PC-3 (cell line): ENCODE measurements at regions of chr1 and their contacts with region 1.

Region 1: GRCh38 chr1:182215764-182216163 is 154.3 kb upstream of the ZNF648 start:
- DNase-seq: peak; percentile 70
- ATAC-seq: peak; percentile 56
- H3K4me3 ChIP-seq: no peak overlapping the region
- H3K27ac ChIP-seq: peak overlapping the region; percentile 89
- H3K4me1 ChIP-seq: peaks cover 27% of the 10 kb centered on the region
- H3K27me3 ChIP-seq: no peaks in the 10 kb centered on the region
- CTCF ChIP-seq: no peak

Region 2: GRCh38 chr1:182185813-182186756 is 29.7 kb before region 1 on chr1:
- CTCF ChIA-PET with region 1: no interaction called
- POLR2A ChIA-PET with region 1: interaction called, 3 read pairs
- intact Hi-C with region 1: loop called (anchors 1 kb)
- DNase-seq: peak; percentile 92
- ATAC-seq: peak; percentile 87
- H3K4me3 ChIP-seq: peak overlapping the region; percentile 23; the same call in 1 of the 2 replicates
- H3K27ac ChIP-seq: peak overlapping the region; percentile 82
- H3K4me1 ChIP-seq: peaks cover 35% of the 10 kb centered on the region
- H3K27me3 ChIP-seq: no peaks in the 10 kb centered on the region
- CTCF ChIP-seq: no peak

Region 3: GRCh38 chr1:182235952-182236650 is 20.3 kb after region 1 on chr1:
- CTCF ChIA-PET with region 1: no interaction called
- POLR2A ChIA-PET with region 1: no interaction called
- intact Hi-C with region 1: loop called (anchors 1 kb)
- DNase-seq: peak; percentile 73
- ATAC-seq: peak; percentile 92
- H3K4me3 ChIP-seq: no peak overlapping the region
- H3K27ac ChIP-seq: peak overlapping the region; percentile 67
- H3K4me1 ChIP-seq: peaks cover 25% of the 10 kb centered on the region
- H3K27me3 ChIP-seq: no peaks in the 10 kb centered on the region
- CTCF ChIP-seq: no peak

Region 4: GRCh38 chr1:182317611-182318161 is 101.9 kb after region 1 on chr1:
- CTCF ChIA-PET with region 1: no interaction called
- POLR2A ChIA-PET with region 1: no interaction called
- intact Hi-C with region 1: loop called (anchors 2 kb)
- DNase-seq: no peak
- ATAC-seq: no peak
- H3K4me3 ChIP-seq: no peak overlapping the region
- H3K27ac ChIP-seq: no peak overlapping the region
- H3K4me1 ChIP-seq: no peaks in the 10 kb centered on the region
- H3K27me3 ChIP-seq: no peaks in the 10 kb centered on the region
- CTCF ChIP-seq: no peak

Region 5: DNA sequence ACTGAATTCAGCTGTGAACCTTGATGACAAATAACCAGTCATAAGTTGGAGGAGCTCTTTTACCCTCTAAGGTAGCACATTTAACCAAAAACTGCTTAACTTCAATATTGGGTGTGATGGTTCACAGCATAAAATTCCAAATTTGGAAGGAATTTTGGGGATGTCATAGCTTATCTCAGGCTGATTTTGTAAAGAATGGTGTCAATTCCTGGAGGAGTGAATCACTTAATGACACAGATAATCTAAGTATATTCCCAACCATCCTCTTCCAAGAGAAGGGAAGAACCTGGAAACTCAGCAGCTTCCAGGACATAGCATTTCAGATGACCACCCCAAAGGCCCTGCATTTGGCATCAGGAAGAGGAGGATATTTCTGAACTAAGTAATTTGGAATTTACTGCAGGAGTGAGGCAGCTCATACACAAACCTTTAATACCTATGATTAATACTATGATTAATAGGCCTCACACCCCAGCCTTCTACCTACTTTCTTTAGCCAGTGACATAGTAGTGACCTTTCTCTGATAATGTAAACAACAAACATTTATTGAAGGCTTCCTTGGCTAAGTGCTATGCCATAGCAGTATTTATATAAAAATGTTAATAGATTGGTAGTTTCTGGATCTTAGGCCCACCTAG is 161.3 kb after region 1 on chr1:
- CTCF ChIA-PET with region 1: no interaction called
- POLR2A ChIA-PET with region 1: no interaction called
- intact Hi-C with region 1: loop called (anchors 5 kb)
- DNase-seq: peak; percentile 62
- ATAC-seq: peak; percentile 84
- H3K4me3 ChIP-seq: no peak overlapping the region
- H3K27ac ChIP-seq: peak overlapping the region; percentile 74
- H3K4me1 ChIP-seq: peaks cover 17% of the 10 kb centered on the region
- H3K27me3 ChIP-seq: no peaks in the 10 kb centered on the region
- CTCF ChIP-seq: no peak

Region 6: DNA sequence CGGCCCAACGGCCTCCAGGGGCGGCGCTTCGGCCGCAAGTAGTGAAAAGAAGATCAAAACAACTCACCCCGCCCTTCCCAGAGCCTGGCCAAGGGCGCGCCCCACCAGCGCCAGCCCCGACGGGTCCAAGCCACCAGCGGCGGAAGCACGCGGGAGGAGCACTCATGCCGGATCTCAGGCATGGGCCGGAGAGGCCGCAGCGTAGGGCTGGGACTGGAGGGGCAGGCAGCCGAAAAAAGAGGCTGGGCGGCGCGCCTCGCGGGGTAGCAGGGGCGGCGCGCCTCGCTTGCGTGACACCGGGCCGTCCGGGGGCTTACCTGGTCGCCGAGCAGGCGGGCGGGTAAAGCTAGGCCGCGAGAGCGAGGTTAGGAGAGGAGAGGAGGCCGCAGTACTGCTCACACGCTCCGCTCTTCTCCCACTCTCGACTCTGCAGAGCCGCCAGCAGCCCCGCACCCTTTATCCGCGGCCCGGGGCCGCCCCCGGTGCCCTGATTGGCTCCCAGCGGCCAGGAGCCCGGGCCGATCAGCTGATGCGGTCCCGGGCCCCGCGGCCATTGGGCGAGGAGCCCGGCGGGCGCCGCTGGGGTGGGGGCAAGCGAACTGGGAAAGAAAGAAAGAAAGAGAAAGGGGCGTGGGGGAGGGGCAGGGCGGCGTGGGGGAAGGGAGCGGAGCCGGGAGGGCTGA is 175.7 kb after region 1 on chr1 and contains the start of gene GLUL:
- CTCF ChIA-PET with region 1: no interaction called
- POLR2A ChIA-PET with region 1: no interaction called
- intact Hi-C with region 1: loop called (anchors 1 kb)
- DNase-seq: peak; percentile 88
- ATAC-seq: peak; percentile 88
- H3K4me3 ChIP-seq: peak within 1 kb of the TSS; percentile 95
- H3K27ac ChIP-seq: peak within 1 kb of the TSS; percentile 73
- H3K4me1 ChIP-seq: peaks cover 12% of the 10 kb centered on the region
- H3K27me3 ChIP-seq: no peaks in the 10 kb centered on the region
- CTCF ChIP-seq: no peak
- total RNA-seq, gene GLUL: 131 and 159 TPM in 2 replicates